ENCODE measurements at regions of chr7 and their contacts with region 1.

Region 1: GRCh38 chr7:124784879-124785818 is 19.6 kb upstream of the GPR37 start:
- DNase-seq: peak; percentile 32
- H3K4me3 Mint-ChIP-seq: no peak overlapping the region
- H3K27ac Mint-ChIP-seq: no peak overlapping the region
- H3K4me1 Mint-ChIP-seq: no peaks in the 10 kb centered on the region
- H3K27me3 Mint-ChIP-seq: peaks cover 28% of the 10 kb centered on the region

Region 2: GRCh38 chr7:124101173-124101768 is 683.9 kb before region 1 on chr7:
- CTCF ChIA-PET with region 1: no interaction called
- intact Hi-C with region 1: loop called (anchors 5 kb)
- DNase-seq: peak; percentile 8
- H3K4me3 Mint-ChIP-seq: no peak overlapping the region
- H3K27ac Mint-ChIP-seq: no peak overlapping the region
- H3K4me1 Mint-ChIP-seq: no peaks in the 10 kb centered on the region
- H3K27me3 Mint-ChIP-seq: no peaks in the 10 kb centered on the region

Region 3: DNA sequence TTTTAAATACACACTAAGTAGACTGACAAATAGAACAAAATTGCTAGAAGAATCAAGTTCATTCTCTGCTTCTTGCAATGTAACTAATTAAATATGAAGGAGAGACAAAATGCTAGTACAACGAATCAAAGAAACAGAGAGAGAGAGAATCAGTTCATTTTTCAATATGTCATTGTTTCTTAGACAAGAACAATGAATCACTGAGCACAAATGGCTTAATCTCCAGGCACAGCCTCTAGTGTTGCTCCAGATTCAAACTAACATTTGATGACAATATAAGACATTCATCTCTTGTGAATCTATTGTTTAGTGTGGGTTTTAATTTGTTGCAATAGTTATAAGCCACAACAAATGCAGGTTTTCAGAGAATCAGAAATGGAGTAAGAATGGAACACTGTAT is 394.8 kb before region 1 on chr7:
- CTCF ChIA-PET with region 1: no interaction called
- intact Hi-C with region 1: no loop called
- DNase-seq: no peak
- H3K4me3 Mint-ChIP-seq: no peak overlapping the region
- H3K27ac Mint-ChIP-seq: no peak overlapping the region
- H3K4me1 Mint-ChIP-seq: no peaks in the 10 kb centered on the region
- H3K27me3 Mint-ChIP-seq: no peaks in the 10 kb centered on the region

Region 4: GRCh38 chr7:124737744-124738300 is 47.3 kb before region 1 on chr7:
- CTCF ChIA-PET with region 1: no interaction called
- intact Hi-C with region 1: no loop called
- DNase-seq: no peak
- H3K4me3 Mint-ChIP-seq: no peak overlapping the region
- H3K27ac Mint-ChIP-seq: no peak overlapping the region
- H3K4me1 Mint-ChIP-seq: no peaks in the 10 kb centered on the region
- H3K27me3 Mint-ChIP-seq: peaks cover 4% of the 10 kb centered on the region

Region 5: GRCh38 chr7:126222782-126223181 is 1437.6 kb after region 1 on chr7:
- CTCF ChIA-PET with region 1: no interaction called
- intact Hi-C with region 1: no loop called
- DNase-seq: no peak
- H3K4me3 Mint-ChIP-seq: no peak overlapping the region
- H3K27ac Mint-ChIP-seq: no peak overlapping the region
- H3K4me1 Mint-ChIP-seq: no peaks in the 10 kb centered on the region
- H3K27me3 Mint-ChIP-seq: no peaks in the 10 kb centered on the region